AG04449 (cell line): ENCODE measurements at regions of chr22 and their contacts with region 1.

Region 1: DNA sequence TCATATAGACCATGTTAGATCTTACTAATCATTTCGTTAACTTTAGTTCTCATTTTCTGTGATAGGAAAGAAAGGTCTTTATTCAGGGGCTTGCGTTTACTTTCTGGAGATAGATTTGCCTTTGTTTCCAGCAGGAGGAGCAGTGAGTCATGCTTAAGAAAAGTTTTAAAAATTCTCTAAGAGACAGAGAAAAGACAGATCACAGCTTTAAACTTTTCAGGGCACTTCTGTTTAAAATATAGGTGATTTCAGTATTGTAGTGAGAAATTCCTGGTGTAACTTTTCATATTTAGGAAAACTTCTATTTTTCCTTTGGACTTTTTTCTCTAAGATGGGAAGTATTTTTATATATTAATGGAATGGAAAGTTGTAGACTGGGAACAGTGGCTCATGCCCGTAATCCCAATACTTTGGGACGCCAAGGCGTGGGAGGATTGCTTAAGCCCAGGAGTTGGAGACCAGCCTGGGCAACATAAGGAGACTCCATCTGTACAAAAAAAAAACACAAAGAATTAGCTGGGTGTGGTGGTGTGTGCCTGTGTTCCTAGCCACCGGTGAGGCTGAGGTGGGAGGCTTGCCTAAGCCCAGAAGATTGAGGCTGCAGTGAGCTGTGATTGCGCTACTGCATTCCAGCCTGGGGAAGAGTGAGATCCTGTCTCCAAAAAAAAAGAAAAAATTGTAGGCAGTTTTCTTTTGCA is 60.3 kb downstream of the ATXN10 start:
- DNase-seq: no peak
- H3K4me3 ChIP-seq: no peak overlapping the region
- CTCF ChIP-seq: no peak

Region 2: GRCh38 chr22:45717789-45718188 is 14.2 kb before region 1 on chr22:
- CTCF ChIA-PET with region 1: interaction called, 23 read pairs
- POLR2A ChIA-PET with region 1: no interaction called
- DNase-seq: peak; percentile 50
- H3K4me3 ChIP-seq: no peak overlapping the region
- CTCF ChIP-seq: no peak

Region 3: GRCh38 chr22:45831394-45831793 is 99.4 kb after region 1 on chr22:
- CTCF ChIA-PET with region 1: interaction called, 13 read pairs
- POLR2A ChIA-PET with region 1: no interaction called
- DNase-seq: no peak
- H3K4me3 ChIP-seq: no peak overlapping the region
- CTCF ChIP-seq: peak; percentile 43